ENCODE measurements at regions of chr16 and their contacts with region 1.

Region 1: GRCh38 chr16:56931892-56932720 is at the start of gene HERPUD1:
- DNase-seq: peak; percentile 95 to 99 (median 99)
- ATAC-seq: peak; percentile 93 to 96
- H3K4me3 Mint-ChIP-seq: peak within 1 kb of the TSS; percentile 94 to 99 (median 98)
- H3K27ac Mint-ChIP-seq: peak within 1 kb of the TSS; percentile 90 to 99 (median 97)
- H3K4me1 Mint-ChIP-seq: peaks cover 21 to 56% (median 43%) of the 10 kb centered on the region in 4 donors
- H3K27me3 Mint-ChIP-seq: no peaks in the 10 kb centered on the region
- polyA plus RNA-seq, gene HERPUD1: 43.8 to 88.6 (median 57.6) TPM

Region 2: DNA sequence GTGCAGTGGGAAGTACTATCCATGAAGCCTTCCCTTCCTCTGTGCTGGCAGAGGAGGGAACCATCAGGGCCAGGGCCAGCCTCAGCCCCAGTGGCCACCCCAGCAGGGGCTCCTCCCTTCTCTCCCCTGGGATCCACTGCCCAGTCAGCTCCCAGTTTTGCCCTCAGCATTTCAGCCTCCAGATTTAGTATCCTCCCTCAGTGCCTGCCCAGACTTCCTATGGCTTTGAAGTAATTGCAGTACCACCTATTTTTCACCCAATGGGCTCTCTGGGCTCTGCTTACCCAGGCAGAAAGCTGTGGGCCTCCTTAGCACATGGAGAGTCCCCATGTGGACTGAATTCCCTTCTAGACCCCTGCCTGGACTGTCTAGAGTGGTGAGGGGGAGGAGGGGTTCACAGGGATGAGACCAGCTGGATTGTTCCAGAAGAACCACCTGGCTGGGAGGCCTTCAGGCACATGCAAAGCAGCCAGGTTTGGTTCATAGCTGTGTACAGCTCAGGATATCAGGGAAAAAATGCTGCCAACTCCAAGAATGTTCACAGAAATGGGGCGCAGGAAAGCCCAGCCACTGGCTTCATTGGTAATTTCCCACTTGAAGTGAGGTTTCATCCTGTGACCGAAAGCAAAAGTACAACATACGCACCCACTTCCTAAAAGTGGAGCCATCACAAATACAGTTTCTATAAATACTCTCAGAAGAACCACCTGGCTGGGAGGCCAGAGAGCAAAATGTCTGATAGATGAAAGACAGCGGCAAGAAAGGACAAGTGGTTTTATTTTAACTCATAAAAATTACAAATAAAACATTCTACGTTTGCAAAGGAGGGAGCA is 15.3 kb before region 1 on chr16:
- POLR2A ChIA-PET with region 1: interaction called, 35 read pairs
- DNase-seq: peak in 3 of 10 donors; percentile 12 to 33 (median 28)
- ATAC-seq: peak; percentile 70 to 82
- H3K4me3 Mint-ChIP-seq: peak overlapping the region; percentile 16 to 80 (median 60)
- H3K27ac Mint-ChIP-seq: peak overlapping the region; percentile 5 to 96 (median 82)
- H3K4me1 Mint-ChIP-seq: peaks cover 23 to 72% (median 31%) of the 10 kb centered on the region in 4 donors
- H3K27me3 Mint-ChIP-seq: peaks cover 0 to 3% (median 0%) of the 10 kb centered on the region in 5 donors

Region 3: DNA sequence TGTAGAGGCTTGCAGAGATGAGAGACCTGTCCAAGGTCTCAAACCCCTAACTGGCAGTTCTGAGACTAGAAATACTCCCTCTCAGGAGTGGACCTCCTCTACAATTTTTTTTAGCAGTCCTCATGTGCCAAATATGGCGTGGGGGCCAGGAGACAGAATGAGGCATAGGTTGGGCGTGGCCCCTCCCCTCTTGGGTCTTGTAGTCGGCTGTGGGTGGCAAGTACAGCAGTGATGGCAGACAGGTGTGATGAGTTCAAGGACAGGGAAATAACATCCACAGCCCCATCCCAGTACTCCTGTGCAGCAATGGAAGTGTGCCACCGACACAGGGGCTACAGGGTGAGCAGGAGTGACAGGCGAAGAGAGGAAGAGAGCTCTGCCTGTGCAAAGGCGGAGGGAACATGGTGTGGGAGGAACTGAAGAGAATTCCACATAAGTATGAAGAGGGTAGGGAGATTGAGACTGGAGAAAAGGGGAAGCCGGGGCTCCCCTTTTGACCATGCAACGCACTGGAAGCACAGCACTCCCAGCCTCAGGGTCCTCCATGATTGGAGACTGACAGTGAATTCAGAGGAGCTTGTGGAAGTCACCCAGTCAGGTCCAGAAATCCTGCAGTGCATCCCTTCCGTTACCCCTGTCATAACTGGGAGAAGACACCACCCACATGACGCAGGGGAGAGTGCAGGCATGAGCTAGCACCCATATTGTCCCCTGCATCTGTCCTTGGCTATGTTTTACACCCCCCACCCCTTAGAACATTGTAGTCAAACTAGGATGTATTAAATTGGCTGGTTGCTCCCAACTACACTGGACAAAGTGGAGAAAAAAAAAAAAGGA is 14.9 kb after region 1 on chr16:
- POLR2A ChIA-PET with region 1: interaction called, 16 read pairs
- DNase-seq: no peak
- ATAC-seq: no peak
- H3K4me3 Mint-ChIP-seq: no peak overlapping the region
- H3K27ac Mint-ChIP-seq: peak overlapping the region in 6 of 10 donors; percentile 31 to 71 (median 65)
- H3K4me1 Mint-ChIP-seq: peaks cover 11 to 28% (median 17%) of the 10 kb centered on the region in 4 donors
- H3K27me3 Mint-ChIP-seq: no peaks in the 10 kb centered on the region

Region 4: DNA sequence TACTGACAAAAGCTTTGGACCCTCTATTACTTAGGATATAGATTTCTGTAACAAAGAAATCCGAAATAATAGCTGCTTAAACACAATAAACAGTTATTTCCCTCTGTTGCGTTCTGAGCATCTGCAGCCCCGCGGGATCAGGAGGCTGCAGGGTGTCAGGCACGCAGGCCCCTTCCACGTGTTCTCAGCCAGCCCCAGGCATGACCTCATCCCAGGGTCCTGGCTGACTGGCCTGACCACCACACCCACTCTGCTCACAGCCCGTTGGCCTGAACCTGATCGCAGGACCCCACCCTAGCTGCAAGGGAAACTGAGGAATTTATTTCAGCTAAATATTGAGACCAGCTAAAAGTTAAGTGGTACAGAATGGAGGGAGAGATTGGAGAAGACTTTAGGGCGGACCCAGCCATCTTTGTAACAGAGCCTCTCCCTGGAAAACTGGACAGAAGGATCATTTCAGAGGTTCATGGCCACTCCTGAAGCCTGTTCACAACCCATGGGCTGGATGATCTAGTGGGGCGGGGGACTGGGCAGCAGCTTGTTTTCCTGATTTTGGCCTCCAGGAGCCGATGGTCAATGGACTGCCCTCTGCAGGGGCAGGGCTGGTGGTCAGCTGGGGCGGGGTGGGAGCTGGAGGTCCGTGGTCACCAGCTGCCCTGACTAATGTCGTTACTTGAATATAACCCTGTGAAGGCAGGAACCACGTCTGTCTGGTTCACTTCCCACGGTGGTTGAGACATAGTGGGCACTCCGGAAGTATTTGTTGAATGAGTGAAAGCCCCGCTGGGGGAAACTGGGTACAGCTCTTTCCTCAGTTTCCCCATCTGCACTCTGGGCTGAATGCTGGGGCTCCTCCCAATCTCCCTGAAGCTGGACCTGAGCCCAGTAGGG is 40.5 kb after region 1 on chr16:
- POLR2A ChIA-PET with region 1: no interaction called
- DNase-seq: no peak
- ATAC-seq: no peak
- H3K4me3 Mint-ChIP-seq: peak overlapping the region in 1 of 10 donors; percentile 22
- H3K27ac Mint-ChIP-seq: peak overlapping the region in 4 of 10 donors; percentile 34 to 78 (median 58)
- H3K4me1 Mint-ChIP-seq: peaks cover 31 to 66% (median 64%) of the 10 kb centered on the region in 4 donors
- H3K27me3 Mint-ChIP-seq: no peaks in the 10 kb centered on the region

Region 5: GRCh38 chr16:57185944-57186871 is 254.1 kb after region 1 on chr16 and contains the starts of genes PSME3IP1 and RSPRY1:
- POLR2A ChIA-PET with region 1: interaction called, 13 read pairs
- DNase-seq: peak; percentile 88 to 100 (median 99)
- ATAC-seq: peak; percentile 88 to 90
- H3K4me3 Mint-ChIP-seq: peak within 1 kb of the TSS; percentile 95 to 100 (median 98)
- H3K27ac Mint-ChIP-seq: peak within 1 kb of the TSS; percentile 92 to 99 (median 98)
- H3K4me1 Mint-ChIP-seq: peaks cover 32 to 69% (median 65%) of the 10 kb centered on the region in 4 donors
- H3K27me3 Mint-ChIP-seq: no peaks in the 10 kb centered on the region
- polyA plus RNA-seq, gene PSME3IP1: 66.0 to 81.4 (median 67.1) TPM
- polyA plus RNA-seq, gene RSPRY1: 28.4 to 34.6 (median 29.3) TPM

Region 6: GRCh38 chr16:57256642-57257395 is 324.7 kb after region 1 on chr16:
- POLR2A ChIA-PET with region 1: no interaction called
- DNase-seq: no peak
- ATAC-seq: no peak
- H3K4me3 Mint-ChIP-seq: peak overlapping the region in 1 of 10 donors; percentile 65
- H3K27ac Mint-ChIP-seq: peak overlapping the region in 4 of 10 donors; percentile 43 to 74 (median 57)
- H3K4me1 Mint-ChIP-seq: peaks cover 5 to 21% (median 14%) of the 10 kb centered on the region in 4 donors
- H3K27me3 Mint-ChIP-seq: no peaks in the 10 kb centered on the region